ENCODE measurements at regions of chr6 and their contacts with region 1.

Region 1: DNA sequence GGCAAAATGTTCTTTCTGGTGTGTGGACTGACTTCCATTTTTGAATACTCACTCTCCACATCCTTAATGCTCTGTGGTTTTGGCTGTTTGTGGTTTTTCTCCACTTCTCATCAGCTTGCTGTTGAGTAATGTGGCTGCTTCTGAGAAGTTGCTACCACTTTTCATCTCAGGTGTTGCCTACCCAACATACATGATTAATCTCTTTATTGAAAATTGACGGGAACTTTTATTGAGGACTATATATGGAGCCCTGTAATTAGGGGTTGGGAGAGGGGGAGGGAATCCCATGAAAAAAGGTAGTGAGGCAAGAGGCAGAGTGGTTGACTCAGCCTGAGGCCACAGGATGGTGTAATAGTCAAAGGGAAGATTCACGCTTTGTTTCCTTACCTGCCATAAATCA is 17.6 kb downstream of the IL22RA2 start:
- H3K4me3 Mint-ChIP-seq: no peak overlapping the region
- H3K27ac Mint-ChIP-seq: peak overlapping the region; percentile 57
- H3K4me1 Mint-ChIP-seq: peaks cover 47% of the 10 kb centered on the region
- H3K27me3 Mint-ChIP-seq: no peaks in the 10 kb centered on the region

Region 2: DNA sequence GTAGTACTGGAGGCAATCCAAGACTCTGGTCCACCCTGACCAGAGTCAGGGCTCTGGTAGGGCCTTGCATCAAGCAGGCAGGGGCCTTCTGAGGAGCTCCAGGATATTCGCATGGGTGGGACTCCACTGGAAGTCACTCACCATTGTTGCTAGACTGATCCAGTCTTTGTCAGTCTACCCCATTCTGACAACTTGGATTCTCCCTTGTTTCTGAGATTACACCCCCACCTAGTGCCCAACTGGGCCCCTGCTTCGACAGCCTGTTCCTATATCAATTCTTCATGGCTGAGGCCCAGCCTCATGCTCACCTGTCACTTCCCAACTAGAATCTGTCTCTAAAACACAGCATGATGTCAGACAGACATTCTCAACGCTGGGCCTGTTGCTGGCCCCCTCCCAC is 228.5 kb before region 1 on chr6:
- intact Hi-C with region 1: no loop called
- H3K4me3 Mint-ChIP-seq: no peak overlapping the region
- H3K27ac Mint-ChIP-seq: no peak overlapping the region
- H3K4me1 Mint-ChIP-seq: peaks cover 17% of the 10 kb centered on the region
- H3K27me3 Mint-ChIP-seq: peaks cover 51% of the 10 kb centered on the region

Region 3: GRCh38 chr6:137086031-137086430 is 69.8 kb before region 1 on chr6:
- intact Hi-C with region 1: no loop called
- H3K4me3 Mint-ChIP-seq: no peak overlapping the region
- H3K27ac Mint-ChIP-seq: no peak overlapping the region
- H3K4me1 Mint-ChIP-seq: peaks cover 10% of the 10 kb centered on the region
- H3K27me3 Mint-ChIP-seq: no peaks in the 10 kb centered on the region

Region 4: DNA sequence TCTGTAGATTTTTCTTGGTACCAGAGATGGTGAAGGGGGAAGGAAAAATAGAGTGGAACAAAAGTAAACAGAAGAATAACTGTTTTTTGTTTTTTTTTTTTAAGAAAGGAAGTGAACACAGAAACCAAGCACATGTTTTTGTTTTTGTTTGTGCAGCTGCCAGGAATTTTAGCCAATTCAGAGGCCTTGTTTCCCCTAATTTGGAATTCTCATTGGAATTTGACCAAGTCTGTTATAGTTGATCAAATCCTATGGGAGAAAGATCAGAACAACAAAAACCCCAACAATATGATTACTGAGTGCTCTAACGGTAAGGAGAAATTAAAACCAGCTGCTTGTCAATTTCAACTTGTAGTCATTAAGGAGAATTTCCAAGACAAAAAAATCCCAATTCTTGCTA is 35.8 kb after region 1 on chr6:
- intact Hi-C with region 1: loop called (anchors 5 kb)
- H3K4me3 Mint-ChIP-seq: no peak overlapping the region
- H3K27ac Mint-ChIP-seq: peak overlapping the region; percentile 84
- H3K4me1 Mint-ChIP-seq: peaks cover 17% of the 10 kb centered on the region
- H3K27me3 Mint-ChIP-seq: no peaks in the 10 kb centered on the region